ENCODE measurements at regions of chr20 and their contacts with region 1.

Region 1: GRCh38 chr20:50540620-50541605 is 30.7 kb downstream of the PTPN1 start:
- DNase-seq: peak; percentile 79 to 99
- H3K4me3 ChIP-seq: peak overlapping the region; percentile 27; the same call in 1 of the 2 replicates
- H3K27ac ChIP-seq: peak overlapping the region; percentile 94
- H3K4me1 ChIP-seq: peaks cover 54% of the 10 kb centered on the region
- H3K27me3 ChIP-seq: no peaks in the 10 kb centered on the region
- CTCF ChIP-seq: no peak; the same call in 1 of the 2 replicates

Region 2: GRCh38 chr20:50491926-50492634 is 48.8 kb before region 1 on chr20:
- CTCF ChIA-PET with region 1: interaction called, 3 read pairs
- POLR2A ChIA-PET with region 1: no interaction called
- intact Hi-C with region 1: loop called (anchors 5 kb)
- DNase-seq: peak; percentile 36 to 58
- H3K4me3 ChIP-seq: no peak overlapping the region
- H3K27ac ChIP-seq: peak overlapping the region; percentile 88
- H3K4me1 ChIP-seq: peaks cover 29% of the 10 kb centered on the region
- H3K27me3 ChIP-seq: no peaks in the 10 kb centered on the region
- CTCF ChIP-seq: no peak

Region 3: GRCh38 chr20:50504231-50504823 is 36.6 kb before region 1 on chr20:
- CTCF ChIA-PET with region 1: interaction called, 24 read pairs
- POLR2A ChIA-PET with region 1: interaction called, 5 read pairs
- intact Hi-C with region 1: no loop called
- DNase-seq: no peak
- H3K4me3 ChIP-seq: no peak overlapping the region
- H3K27ac ChIP-seq: no peak overlapping the region
- H3K4me1 ChIP-seq: peaks cover 3% of the 10 kb centered on the region
- H3K27me3 ChIP-seq: no peaks in the 10 kb centered on the region
- CTCF ChIP-seq: no peak

Region 4: GRCh38 chr20:50509935-50510705 is 30.8 kb before region 1 on chr20 and contains the start of gene PTPN1:
- CTCF ChIA-PET with region 1: no interaction called
- POLR2A ChIA-PET with region 1: interaction called, 6 read pairs
- intact Hi-C with region 1: loop called (anchors 1 kb)
- DNase-seq: peak; percentile 97 to 99
- H3K4me3 ChIP-seq: peak within 1 kb of the TSS; percentile 75
- H3K27ac ChIP-seq: peak within 1 kb of the TSS; percentile 35
- H3K4me1 ChIP-seq: peaks cover 41% of the 10 kb centered on the region
- H3K27me3 ChIP-seq: no peaks in the 10 kb centered on the region
- CTCF ChIP-seq: 0 out of 2 replicates have a peak, but pooled peaks have one; percentile 11
- total RNA-seq, gene PTPN1: 46.3 and 59.8 TPM in 2 replicates

Region 5: DNA sequence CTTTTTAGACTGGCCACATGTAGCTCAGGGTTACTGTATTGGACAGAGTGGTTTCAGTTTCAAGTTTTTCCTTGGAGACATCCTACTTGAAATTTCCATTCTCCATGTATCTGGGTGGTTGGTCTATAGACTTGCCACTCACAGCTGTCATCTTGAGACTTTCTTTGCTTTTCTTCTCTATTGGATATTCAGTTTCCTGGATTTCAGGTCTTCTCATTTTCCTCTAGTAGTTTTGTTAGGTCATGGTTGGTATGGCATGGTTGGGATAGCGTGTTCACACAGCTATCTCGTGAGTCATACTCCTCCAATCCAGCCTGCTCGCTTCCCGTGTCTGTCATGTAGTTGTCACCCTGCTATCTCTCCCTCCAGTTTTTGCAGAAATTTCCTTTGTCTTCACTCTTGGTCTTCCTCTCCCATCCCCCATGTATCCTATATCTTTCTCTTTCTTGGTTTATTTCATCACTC is 17.6 kb after region 1 on chr20:
- CTCF ChIA-PET with region 1: interaction called, 4 read pairs
- POLR2A ChIA-PET with region 1: no interaction called
- intact Hi-C with region 1: loop called (anchors 1 kb)
- DNase-seq: peak; percentile 55 to 64
- H3K4me3 ChIP-seq: no peak overlapping the region
- H3K27ac ChIP-seq: peak overlapping the region; percentile 55
- H3K4me1 ChIP-seq: peaks cover 32% of the 10 kb centered on the region
- H3K27me3 ChIP-seq: no peaks in the 10 kb centered on the region
- CTCF ChIP-seq: no peak

Region 6: DNA sequence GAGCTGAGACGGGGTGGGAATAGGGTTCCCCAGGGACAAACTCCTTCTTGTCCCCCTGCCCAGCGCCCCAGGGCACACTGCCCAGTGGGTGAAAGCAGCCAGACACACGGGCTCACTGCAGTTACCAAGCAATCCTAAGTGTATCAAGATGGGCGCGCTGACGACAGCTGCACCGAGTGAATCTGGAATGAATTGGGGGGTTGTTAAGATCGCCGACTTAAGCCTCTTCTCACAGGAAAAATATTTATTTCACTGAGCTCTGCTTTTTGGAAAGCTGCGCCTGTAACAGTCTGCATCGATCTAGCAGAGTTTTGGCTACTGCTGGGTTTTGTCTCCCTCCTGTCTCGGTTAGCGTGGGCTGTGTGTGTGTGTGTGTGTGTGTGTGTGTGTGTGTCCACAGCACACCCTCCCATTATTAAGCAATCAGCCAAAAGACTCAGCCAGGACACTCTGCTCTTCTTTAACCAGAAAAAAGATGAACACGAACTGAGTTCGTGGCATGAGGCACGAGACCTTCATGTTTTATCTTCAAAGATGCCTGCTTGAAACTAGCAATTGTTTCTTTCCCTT is 114.5 kb after region 1 on chr20:
- CTCF ChIA-PET with region 1: interaction called, 10 read pairs
- POLR2A ChIA-PET with region 1: no interaction called
- intact Hi-C with region 1: no loop called
- DNase-seq: no peak
- H3K4me3 ChIP-seq: no peak overlapping the region
- H3K27ac ChIP-seq: no peak overlapping the region
- H3K4me1 ChIP-seq: peaks cover 29% of the 10 kb centered on the region
- H3K27me3 ChIP-seq: no peaks in the 10 kb centered on the region
- CTCF ChIP-seq: no peak

Region 7: GRCh38 chr20:50776122-50776817 is 235.4 kb after region 1 on chr20:
- CTCF ChIA-PET with region 1: no interaction called
- POLR2A ChIA-PET with region 1: interaction called, 20 read pairs
- intact Hi-C with region 1: no loop called
- DNase-seq: no peak
- H3K4me3 ChIP-seq: no peak overlapping the region
- H3K27ac ChIP-seq: no peak overlapping the region
- H3K4me1 ChIP-seq: no peaks in the 10 kb centered on the region
- H3K27me3 ChIP-seq: no peaks in the 10 kb centered on the region
- CTCF ChIP-seq: no peak

Measured in PC-9 (cell line).